AG04450 (cell line): ENCODE measurements at regions of chr9 and their contacts with region 1.

Region 1: GRCh38 chr9:132240753-132241493 is 79.1 kb downstream of the NTNG2 start:
- DNase-seq: peak; percentile 65
- H3K4me3 ChIP-seq: peak overlapping the region; percentile 62
- H3K27ac ChIP-seq: no peak overlapping the region
- H3K27me3 ChIP-seq: peaks cover 54% of the 10 kb centered on the region
- CTCF ChIP-seq: no peak

Region 2: DNA sequence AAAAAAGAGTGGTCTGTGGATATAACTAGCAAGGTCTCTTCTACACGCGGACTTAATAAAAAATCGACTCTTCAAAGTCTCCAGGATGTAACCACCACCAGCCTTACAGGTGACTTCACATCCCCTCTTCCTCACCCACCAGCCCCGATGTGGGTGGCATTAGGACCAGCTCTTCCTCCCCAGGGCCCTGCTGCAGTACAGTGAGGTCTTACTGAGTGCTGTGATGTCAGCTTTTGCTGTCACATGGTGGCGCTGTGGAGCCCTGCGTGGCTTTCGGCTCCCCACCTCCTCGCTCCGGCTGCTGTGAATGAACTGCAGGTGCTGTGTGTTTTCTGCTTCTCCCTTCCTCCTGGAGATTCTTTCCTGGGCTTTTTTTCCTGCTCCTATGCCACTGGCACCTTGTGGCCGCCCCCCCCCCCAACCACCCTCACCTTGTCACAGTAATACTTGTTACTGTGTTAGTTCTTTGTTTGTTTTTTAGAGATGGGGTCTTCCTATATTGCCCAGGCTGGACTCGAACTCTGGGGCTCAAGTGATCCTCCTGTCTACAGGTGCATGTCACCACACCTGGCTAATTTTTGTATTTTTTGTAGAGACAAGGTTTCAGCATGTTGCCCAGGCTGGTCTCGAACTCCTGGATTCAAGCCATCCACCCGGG is 485.3 kb before region 1 on chr9:
- CTCF ChIA-PET with region 1: interaction called, 154 read pairs
- POLR2A ChIA-PET with region 1: no interaction called
- DNase-seq: no peak
- H3K4me3 ChIP-seq: no peak overlapping the region
- H3K27ac ChIP-seq: no peak overlapping the region
- H3K27me3 ChIP-seq: peaks cover 29% of the 10 kb centered on the region
- CTCF ChIP-seq: peak; percentile 87

Region 3: DNA sequence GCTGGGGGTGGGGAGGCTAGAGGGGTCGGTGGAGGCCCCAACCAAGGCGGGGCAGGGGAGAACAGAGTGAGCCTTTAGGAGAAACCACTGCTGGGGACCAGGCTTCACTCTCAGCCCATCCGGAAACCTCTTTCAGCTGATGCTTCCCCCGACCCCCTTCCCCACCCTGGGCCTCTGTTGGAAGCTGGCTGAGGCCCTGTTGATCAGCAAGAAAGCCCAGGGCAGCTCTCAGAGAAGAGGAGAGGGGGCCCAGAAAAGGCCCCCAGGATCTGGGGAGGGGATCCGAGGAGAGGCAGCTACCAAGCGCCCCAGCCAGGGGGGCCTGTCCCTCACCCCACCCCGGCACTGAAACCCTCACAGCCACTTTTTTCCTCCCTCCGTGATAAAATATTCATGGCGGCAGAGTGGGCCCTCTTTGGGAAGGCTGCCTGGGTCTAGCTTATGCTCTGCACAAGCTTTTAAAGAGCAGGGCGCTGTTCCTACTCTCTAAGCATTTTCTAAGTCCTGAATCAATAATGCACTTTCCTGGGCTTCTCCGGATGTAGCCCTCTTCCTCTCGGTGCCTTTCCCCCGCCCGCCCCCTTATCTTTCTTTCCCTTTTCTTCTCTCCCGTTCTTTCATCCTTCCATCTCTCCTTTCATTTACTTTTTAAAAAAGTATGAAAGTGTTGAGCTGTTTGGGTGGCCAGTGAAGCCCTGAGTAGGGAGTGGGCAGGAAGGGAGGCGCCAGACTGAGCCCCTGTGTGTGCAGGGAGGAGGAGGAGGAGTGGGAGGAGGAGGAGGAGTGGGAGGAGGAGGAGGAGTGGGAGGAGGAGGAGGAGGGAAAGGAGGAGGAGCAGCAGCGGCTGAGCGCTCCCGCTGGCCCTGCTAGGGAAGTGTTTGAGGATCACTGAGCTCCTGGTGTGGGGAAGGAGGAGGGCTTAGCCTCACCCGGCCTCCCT is 55.6 kb before region 1 on chr9:
- CTCF ChIA-PET with region 1: interaction called, 12 read pairs
- POLR2A ChIA-PET with region 1: no interaction called
- DNase-seq: no peak
- H3K4me3 ChIP-seq: no peak overlapping the region
- H3K27ac ChIP-seq: no peak overlapping the region
- H3K27me3 ChIP-seq: peaks cover 78% of the 10 kb centered on the region
- CTCF ChIP-seq: no peak

Region 4: DNA sequence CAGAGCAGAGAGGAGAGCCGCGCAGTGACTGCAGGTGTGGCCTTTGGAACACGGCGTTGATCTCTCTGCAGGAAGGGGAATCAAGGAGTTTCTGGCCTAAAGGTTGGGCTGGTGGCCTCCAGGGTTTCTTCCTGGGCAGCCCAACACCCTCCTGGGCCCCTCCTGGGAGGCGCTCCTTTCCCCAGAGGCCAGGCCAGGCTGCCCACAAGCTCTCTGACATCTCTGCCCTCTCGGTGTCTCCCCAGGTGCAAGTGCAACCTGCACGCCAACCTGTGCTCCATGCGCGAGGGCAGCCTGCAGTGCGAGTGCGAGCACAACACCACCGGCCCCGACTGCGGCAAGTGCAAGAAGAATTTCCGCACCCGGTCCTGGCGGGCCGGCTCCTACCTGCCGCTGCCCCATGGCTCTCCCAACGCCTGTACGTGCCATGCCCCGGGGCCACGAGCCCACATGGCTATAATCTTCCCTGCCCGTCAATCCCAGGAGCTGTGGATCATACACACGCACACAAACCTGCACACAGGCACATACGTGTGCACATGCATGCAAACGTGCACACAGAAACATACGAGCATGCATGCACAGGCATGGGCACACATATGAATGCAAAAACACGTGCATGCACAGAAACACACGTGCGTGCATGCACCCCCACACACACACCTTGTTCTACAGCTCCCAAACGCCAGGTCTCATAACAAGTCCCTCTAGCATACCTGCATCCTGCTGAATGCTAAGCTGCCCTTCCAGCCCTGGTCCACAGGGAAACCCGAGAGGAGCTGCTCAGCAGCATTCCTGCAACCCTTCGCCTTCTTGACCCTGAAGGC is 14.1 kb before region 1 on chr9:
- CTCF ChIA-PET with region 1: interaction called, 10 read pairs
- POLR2A ChIA-PET with region 1: no interaction called
- DNase-seq: no peak
- H3K4me3 ChIP-seq: no peak overlapping the region
- H3K27ac ChIP-seq: no peak overlapping the region
- H3K27me3 ChIP-seq: peaks cover 42% of the 10 kb centered on the region
- CTCF ChIP-seq: no peak